Activated CD4-positive, alpha-beta T cell treated with anti-CD3 and anti-CD28 coated beads for 36 hours (primary cell): ENCODE measurements at regions of chr19 and their contacts with region 1.

Region 1: GRCh38 chr19:3821857-3822364 is 35.7 kb upstream of the MATK start:
- DNase-seq: peak; percentile 94
- ATAC-seq: peak; percentile 78
- H3K4me3 Mint-ChIP-seq: no peak overlapping the region
- H3K27ac Mint-ChIP-seq: no peak overlapping the region
- H3K4me1 Mint-ChIP-seq: peaks cover 23% of the 10 kb centered on the region
- H3K27me3 Mint-ChIP-seq: no peaks in the 10 kb centered on the region

Region 2: GRCh38 chr19:3721131-3721886 is 100.6 kb before region 1 on chr19:
- CTCF ChIA-PET with region 1: interaction called, 3 read pairs
- POLR2A ChIA-PET with region 1: no interaction called
- intact Hi-C with region 1: loop called in 1 of 2 experiments (anchors 1 kb)
- DNase-seq: peak; percentile 92
- ATAC-seq: peak; percentile 94
- H3K4me3 Mint-ChIP-seq: peak overlapping the region; percentile 13
- H3K27ac Mint-ChIP-seq: no peak overlapping the region
- H3K4me1 Mint-ChIP-seq: peaks cover 10% of the 10 kb centered on the region
- H3K27me3 Mint-ChIP-seq: peaks cover 4% of the 10 kb centered on the region

Region 3: GRCh38 chr19:3783660-3784584 is 38.0 kb before region 1 on chr19:
- CTCF ChIA-PET with region 1: interaction called, 6 read pairs
- POLR2A ChIA-PET with region 1: no interaction called
- intact Hi-C with region 1: loop called (anchors 1 to 5 kb)
- DNase-seq: peak; percentile 72
- ATAC-seq: peak; percentile 65
- H3K4me3 Mint-ChIP-seq: peak overlapping the region; percentile 80
- H3K27ac Mint-ChIP-seq: no peak overlapping the region
- H3K4me1 Mint-ChIP-seq: peaks cover 3% of the 10 kb centered on the region
- H3K27me3 Mint-ChIP-seq: no peaks in the 10 kb centered on the region

Region 4: DNA sequence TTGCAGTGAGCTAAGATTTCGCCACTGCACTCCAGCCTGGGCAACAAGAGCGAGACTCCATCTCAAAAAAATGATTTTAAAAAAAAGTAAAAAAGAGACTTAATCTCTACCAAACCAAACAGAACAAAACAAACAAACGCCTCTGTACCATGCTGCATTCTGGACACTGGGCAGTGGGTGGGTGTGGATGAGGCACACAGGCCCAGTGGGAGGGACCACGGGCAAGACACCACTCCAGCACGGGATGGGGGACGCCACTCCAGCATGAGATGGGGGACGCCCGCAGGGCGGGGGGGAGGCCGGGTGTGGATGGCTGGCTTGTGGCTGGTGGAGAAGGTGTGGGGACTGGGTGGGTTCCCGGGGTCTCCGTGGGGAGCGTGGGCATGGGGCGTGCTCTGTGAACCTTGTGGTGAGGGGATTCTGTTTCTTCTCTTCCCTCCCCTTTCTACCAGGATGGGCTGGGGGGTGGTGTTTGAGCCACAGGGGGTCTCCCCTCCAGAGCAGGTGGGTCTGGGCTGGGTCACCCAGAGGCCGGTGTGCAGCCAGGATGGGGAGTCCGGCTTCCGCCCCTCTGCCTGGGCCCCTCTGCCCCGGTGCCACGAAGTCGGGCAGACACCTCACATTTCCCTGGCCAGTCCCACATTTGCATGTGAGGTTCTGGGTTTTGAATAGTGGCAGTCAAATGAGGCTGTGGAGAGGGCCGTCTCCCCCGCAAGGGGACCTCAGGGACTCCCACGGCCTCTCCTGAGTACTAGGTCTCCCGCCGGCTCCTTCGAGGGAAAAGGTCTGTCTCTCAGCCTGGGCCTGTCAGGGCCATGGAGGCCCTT is 11.8 kb before region 1 on chr19:
- CTCF ChIA-PET with region 1: interaction called, 12 read pairs
- POLR2A ChIA-PET with region 1: no interaction called
- intact Hi-C with region 1: no loop called
- DNase-seq: no peak
- ATAC-seq: no peak
- H3K4me3 Mint-ChIP-seq: no peak overlapping the region
- H3K27ac Mint-ChIP-seq: no peak overlapping the region
- H3K4me1 Mint-ChIP-seq: peaks cover 38% of the 10 kb centered on the region
- H3K27me3 Mint-ChIP-seq: no peaks in the 10 kb centered on the region